CD4-positive, alpha-beta T cell (primary cell): ENCODE measurements at regions of chr11 and their contacts with region 1.

Region 1: DNA sequence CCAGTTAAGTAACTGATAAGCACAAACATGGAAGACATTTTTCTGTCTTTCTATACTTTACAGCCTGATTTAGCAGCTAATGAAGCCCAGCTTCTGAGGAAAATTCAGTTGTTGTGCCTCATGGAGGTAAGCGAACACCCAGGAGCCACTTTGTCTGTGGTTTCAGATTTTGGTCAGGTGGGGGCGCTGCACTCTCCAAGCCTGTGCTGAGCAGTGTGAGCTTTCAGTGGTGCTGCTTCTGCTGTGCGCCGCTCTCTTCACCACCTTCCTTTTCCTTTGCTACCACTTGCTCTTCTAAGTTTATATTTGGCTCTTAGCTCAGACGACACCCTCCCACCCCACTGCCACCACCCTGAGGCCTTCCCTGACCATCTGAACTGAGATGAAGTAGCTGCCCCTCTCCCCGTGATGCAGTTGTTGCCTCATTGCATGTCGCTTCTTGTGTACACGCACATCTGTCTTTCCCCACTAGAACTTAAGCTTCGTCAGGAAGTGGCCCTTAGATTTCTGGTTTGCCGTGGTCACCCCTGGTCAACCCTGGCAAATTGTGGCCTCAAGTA is 14.0 kb downstream of the PSMD13 start:
- DNase-seq: peak; percentile 74 to 89 (median 82)
- ATAC-seq: peak; percentile 100
- H3K4me3 ChIP-seq: no peak overlapping the region
- H3K4me3 Mint-ChIP-seq: peak overlapping the region; percentile 20
- H3K27ac ChIP-seq: no peak overlapping the region
- H3K27ac Mint-ChIP-seq: peak overlapping the region; percentile 76
- H3K4me1 ChIP-seq: peaks cover 6% of the 10 kb centered on the region
- H3K4me1 Mint-ChIP-seq: peaks cover 13% of the 10 kb centered on the region
- H3K27me3 ChIP-seq: no peaks in the 10 kb centered on the region
- H3K27me3 Mint-ChIP-seq: no peaks in the 10 kb centered on the region
- CTCF ChIP-seq: peak; percentile 78

Region 2: GRCh38 chr11:279966-280582 is 29.3 kb after region 1 on chr11:
- CTCF ChIA-PET with region 1: interaction called, 29 read pairs
- POLR2A ChIA-PET with region 1: interaction called, 31 read pairs
- intact Hi-C with region 1: loop called (anchors 2 to 5 kb)
- DNase-seq: peak in 10 of 14 experiments; percentile 37 to 78 (median 51)
- ATAC-seq: peak; percentile 69
- H3K4me3 ChIP-seq: peak overlapping the region; percentile 53
- H3K4me3 Mint-ChIP-seq: peak overlapping the region; percentile 92
- H3K27ac ChIP-seq: no peak overlapping the region
- H3K27ac Mint-ChIP-seq: peak overlapping the region; percentile 81
- H3K4me1 ChIP-seq: peaks cover 56% of the 10 kb centered on the region
- H3K4me1 Mint-ChIP-seq: peaks cover 61% of the 10 kb centered on the region
- H3K27me3 ChIP-seq: peaks cover 10 to 18% of the 10 kb centered on the region in 2 experiments
- H3K27me3 Mint-ChIP-seq: peaks cover 12% of the 10 kb centered on the region
- CTCF ChIP-seq: no peak

Region 3: DNA sequence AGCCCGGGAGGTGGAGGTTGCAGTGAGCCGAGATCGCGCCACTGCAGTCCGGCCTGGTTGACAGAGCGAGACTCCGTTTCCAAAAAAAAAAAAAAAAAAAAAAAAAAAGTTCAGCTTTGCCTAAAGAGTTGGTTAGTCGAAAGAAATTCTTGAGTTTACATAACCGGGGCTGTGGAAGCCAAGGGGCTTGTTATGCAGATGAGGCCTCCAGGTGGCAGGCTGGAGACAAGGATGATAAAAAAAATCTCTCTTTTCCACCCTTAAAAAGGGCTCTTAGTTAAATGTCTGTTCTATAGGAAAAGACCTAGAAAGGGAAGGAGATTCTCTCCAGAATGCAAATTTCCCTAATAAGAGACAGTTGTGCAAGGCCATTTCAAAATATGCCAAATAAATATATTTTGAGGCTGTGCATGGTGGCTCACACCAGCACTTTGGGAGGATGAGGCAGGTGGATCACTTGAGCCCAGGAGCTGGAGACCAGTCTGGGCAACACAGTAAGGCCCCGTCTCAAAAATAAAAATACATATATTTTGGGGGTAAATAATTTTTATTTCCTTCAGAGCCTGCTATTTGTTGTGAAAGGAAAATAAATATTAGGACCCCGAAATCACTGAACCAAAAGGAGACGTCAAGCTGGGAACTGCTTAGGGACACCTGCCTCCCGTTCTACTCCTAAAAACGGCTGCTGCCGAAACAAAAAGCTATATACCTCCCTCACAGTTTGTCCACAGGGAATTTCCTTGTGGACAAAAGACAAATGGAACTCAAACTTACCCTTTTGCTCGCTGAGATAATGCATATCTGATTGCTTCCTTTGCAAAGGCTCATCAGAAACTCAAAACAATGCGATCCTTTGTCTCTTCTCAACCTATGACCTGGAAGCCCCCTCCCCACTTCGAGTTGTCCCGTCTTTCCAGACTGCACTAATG is 54.4 kb after region 1 on chr11:
- CTCF ChIA-PET with region 1: interaction called, 31 read pairs
- POLR2A ChIA-PET with region 1: interaction called, 4 read pairs
- intact Hi-C with region 1: loop called in 1 of 2 experiments (anchors 2 kb)
- DNase-seq: peak in 9 of 14 experiments; percentile 52 to 87 (median 63)
- ATAC-seq: peak; percentile 37
- H3K4me3 ChIP-seq: no peak overlapping the region
- H3K4me3 Mint-ChIP-seq: peak overlapping the region; percentile 85
- H3K27ac ChIP-seq: no peak overlapping the region
- H3K27ac Mint-ChIP-seq: peak overlapping the region; percentile 96
- H3K4me1 ChIP-seq: peaks cover 50% of the 10 kb centered on the region
- H3K4me1 Mint-ChIP-seq: peaks cover 39% of the 10 kb centered on the region
- H3K27me3 ChIP-seq: no peaks in the 10 kb centered on the region
- H3K27me3 Mint-ChIP-seq: no peaks in the 10 kb centered on the region
- CTCF ChIP-seq: peak; percentile 80

Region 4: DNA sequence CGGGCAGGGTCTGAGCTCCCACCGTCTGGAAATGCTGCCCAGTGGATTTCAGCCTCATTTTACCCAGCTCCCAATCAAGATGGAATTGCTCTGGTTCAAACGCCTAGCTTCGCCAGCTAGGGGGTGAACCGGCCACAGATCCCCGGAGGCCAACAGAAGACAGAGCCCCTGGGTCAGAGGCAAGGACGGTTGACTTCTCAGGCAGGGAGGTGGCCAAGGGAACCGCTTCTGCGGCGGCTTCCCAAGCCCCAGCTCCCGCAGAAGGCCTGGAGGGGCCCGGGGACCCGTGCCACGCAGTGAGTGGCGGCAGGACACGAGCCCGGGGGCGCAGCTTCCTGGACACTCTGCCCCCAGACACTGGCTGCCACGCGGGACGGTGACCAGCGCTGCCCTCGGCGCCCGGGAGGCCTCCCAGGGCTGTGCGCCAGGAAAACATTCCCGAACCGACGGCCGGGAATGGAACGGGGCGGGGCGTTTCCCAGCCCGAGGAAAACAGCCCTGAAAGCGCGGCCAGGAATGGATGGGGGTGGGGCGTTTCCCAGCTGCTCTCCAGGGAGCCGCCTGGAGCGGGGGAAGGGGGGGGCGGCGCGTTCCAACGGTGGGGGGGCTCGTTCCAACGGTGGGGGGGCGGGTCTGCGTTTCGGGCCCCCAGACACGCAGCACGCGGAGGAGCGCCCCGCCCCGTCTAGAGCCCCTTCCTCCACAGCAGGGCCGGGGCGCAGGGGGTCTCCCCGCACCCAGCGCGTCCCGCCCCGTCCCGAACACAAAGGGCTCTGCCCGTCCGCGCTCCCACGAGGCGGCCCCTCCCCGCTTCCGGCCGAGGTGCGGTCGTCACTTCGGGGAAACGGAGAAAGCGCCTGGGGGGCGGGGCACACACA is 105.0 kb after region 1 on chr11:
- CTCF ChIA-PET with region 1: interaction called, 18 read pairs
- POLR2A ChIA-PET with region 1: interaction called, 9 read pairs
- intact Hi-C with region 1: loop called in 1 of 2 experiments (anchors 5 kb)
- DNase-seq: peak; percentile 59 to 94 (median 88)
- ATAC-seq: peak; percentile 64
- H3K4me3 ChIP-seq: peak overlapping the region; percentile 55
- H3K4me3 Mint-ChIP-seq: peak overlapping the region; percentile 83
- H3K27ac ChIP-seq: peak overlapping the region; percentile 92 to 95
- H3K27ac Mint-ChIP-seq: no peak overlapping the region
- H3K4me1 ChIP-seq: peaks cover 31% of the 10 kb centered on the region
- H3K4me1 Mint-ChIP-seq: peaks cover 45% of the 10 kb centered on the region
- H3K27me3 ChIP-seq: no peaks in the 10 kb centered on the region
- H3K27me3 Mint-ChIP-seq: no peaks in the 10 kb centered on the region
- CTCF ChIP-seq: no peak

Region 5: GRCh38 chr11:396948-397548 is 146.2 kb after region 1 on chr11:
- CTCF ChIA-PET with region 1: interaction called, 9 read pairs
- POLR2A ChIA-PET with region 1: no interaction called
- intact Hi-C with region 1: loop called in 1 of 2 experiments (anchors 2 kb)
- DNase-seq: peak in 7 of 14 experiments; percentile 31 to 71 (median 62)
- ATAC-seq: peak; percentile 68
- H3K4me3 ChIP-seq: peak overlapping the region; percentile 47
- H3K4me3 Mint-ChIP-seq: no peak overlapping the region
- H3K27ac ChIP-seq: no peak overlapping the region
- H3K27ac Mint-ChIP-seq: no peak overlapping the region
- H3K4me1 ChIP-seq: peaks cover 24% of the 10 kb centered on the region
- H3K4me1 Mint-ChIP-seq: peaks cover 5% of the 10 kb centered on the region
- H3K27me3 ChIP-seq: no peaks in the 10 kb centered on the region
- H3K27me3 Mint-ChIP-seq: peaks cover 16% of the 10 kb centered on the region
- CTCF ChIP-seq: peak; percentile 39

Region 6: DNA sequence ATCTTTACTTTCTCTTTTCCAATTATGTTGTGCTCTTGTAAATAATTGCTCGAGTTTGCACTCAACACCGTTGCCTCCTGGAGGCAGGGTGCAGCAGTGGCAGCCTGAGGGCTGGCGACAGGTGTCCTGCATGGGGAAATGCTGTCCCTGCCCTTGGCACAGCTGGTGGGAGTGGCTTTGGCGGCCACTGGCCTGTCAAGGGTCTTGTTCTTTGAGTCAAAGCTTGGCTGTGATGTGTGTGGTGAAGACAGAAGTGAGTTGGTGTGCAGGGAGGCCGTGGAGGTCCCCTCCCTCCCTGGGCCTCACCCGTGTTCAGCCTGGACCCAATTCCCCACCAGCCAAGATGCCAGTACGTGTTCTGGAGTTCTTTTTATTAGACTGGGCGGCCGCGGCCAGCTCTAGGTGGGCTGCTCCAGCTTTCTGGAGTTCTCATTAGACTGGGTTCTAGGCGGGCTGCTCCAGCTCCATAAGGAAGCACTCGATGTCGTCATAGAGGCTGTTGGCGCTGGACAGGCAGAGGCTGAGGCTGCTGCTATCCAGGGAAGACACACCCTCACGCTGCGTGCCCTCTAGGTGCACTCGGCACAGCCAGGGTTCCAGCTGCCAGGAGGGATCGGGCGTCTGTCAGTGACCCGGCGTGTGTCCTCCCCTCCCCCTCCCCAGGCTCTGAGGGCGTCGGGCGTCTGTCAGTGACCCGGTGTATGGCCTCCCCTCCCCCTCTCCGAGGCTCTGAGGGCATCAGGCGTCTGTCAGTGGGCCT is 361.6 kb after region 1 on chr11:
- CTCF ChIA-PET with region 1: no interaction called
- POLR2A ChIA-PET with region 1: no interaction called
- intact Hi-C with region 1: no loop called
- DNase-seq: peak in 4 of 14 experiments; percentile 22 to 60 (median 52)
- ATAC-seq: no peak
- H3K4me3 ChIP-seq: no peak overlapping the region
- H3K4me3 Mint-ChIP-seq: peak overlapping the region; percentile 62
- H3K27ac ChIP-seq: peak overlapping the region; percentile 75 to 82
- H3K27ac Mint-ChIP-seq: peak overlapping the region; percentile 74
- H3K4me1 ChIP-seq: peaks cover 34% of the 10 kb centered on the region
- H3K4me1 Mint-ChIP-seq: peaks cover 16% of the 10 kb centered on the region
- H3K27me3 ChIP-seq: no peaks in the 10 kb centered on the region
- H3K27me3 Mint-ChIP-seq: no peaks in the 10 kb centered on the region
- CTCF ChIP-seq: no peak